ENCODE measurements at regions of chr6 and their contacts with region 1.

Region 1: DNA sequence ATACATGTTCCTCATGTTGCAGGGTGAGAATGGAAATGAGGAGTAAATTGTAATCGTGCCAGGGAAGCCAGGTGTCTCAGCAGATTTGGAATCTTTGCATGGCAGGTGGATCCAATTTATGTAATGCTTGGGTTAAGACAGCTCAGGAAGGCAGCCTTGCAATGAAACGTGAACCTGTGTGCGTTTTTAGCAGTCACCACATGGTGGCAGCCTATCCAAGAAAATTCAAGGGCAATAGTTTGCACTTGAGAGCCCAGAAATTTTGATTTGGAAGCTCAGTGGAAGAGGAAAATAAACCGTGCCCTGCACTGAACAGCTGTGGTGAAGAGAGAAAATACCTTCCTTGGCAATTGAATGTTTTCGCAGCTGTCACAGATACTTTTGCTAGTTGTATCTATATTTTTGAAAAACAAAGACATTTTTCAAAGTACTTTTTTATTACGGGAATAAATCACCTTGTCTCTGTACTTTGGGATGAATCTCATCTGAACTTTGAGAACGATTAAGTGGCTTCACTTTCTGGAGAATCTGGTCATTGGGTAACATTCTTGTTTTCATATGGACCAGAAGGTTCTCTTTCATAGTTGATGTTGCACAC is 26.5 kb downstream of the MTHFD1L start:
- DNase-seq: peak; percentile 34
- ATAC-seq: peak; percentile 69
- H3K4me3 ChIP-seq: no peak overlapping the region
- H3K27ac ChIP-seq: no peak overlapping the region
- H3K4me1 ChIP-seq: peaks cover 40% of the 10 kb centered on the region
- H3K27me3 ChIP-seq: no peaks in the 10 kb centered on the region
- CTCF ChIP-seq: peak; percentile 76 to 89 (median 88)
- EP300 ChIP-seq: no peak
- POLR2A ChIP-seq: no peak
- RAD21 ChIP-seq: peak; percentile 90

Region 2: DNA sequence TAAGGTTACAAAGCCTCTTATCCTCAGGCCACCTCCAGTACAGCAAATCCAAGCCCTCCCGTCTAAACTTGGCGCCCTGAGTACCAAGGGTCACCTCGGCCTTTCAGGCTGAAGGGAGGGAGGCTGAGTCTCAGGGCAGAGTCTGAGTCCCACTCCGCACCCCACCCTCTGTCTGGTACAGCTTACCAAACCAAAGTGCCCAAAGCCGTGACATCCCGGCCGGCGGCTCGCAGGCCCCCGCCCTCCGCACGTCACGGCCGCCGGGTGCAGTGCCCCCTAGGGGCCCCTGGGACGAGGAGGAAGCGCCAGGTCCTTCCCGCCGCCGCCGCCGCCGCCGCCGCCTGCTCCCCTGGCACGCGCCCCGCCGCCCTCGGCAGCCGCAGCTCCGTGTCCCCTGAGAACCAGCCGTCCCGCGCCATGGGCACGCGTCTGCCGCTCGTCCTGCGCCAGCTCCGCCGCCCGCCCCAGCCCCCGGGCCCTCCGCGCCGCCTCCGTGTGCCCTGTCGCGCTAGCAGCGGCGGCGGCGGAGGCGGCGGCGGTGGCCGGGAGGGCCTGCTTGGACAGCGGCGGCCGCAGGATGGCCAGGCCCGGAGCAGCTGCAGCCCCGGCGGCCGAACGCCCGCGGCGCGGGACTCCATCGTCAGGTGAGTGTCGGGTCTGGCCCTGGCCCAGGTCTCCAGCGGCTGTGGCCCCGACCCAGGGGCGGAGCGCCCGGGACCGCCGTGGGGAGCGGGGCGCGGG is 26.4 kb before region 1 on chr6 and contains the start of gene MTHFD1L:
- CTCF ChIA-PET with region 1: interaction called, 11 read pairs
- POLR2A ChIA-PET with region 1: interaction called, 3 read pairs
- RAD21 ChIA-PET with region 1: interaction called, 3 read pairs
- SMC1A ChIA-PET with region 1: interaction called, 5 read pairs
- in situ Hi-C with region 1: no loop called
- intact Hi-C with region 1: no loop called
- DNase-seq: no peak
- ATAC-seq: peak; percentile 76
- H3K4me3 ChIP-seq: peak within 1 kb of the TSS; percentile 81
- H3K27ac ChIP-seq: peak within 1 kb of the TSS; percentile 80
- H3K4me1 ChIP-seq: peaks cover 11% of the 10 kb centered on the region
- H3K27me3 ChIP-seq: no peaks in the 10 kb centered on the region
- CTCF ChIP-seq: peak; percentile 39 to 53 (median 43); a peak in 5 of 6 replicates
- EP300 ChIP-seq: no peak
- POLR2A ChIP-seq: peak; percentile 65
- RAD21 ChIP-seq: peak; percentile 11; the same call in 1 of the 2 replicates
- polyA plus RNA-seq, gene MTHFD1L: 15.6 to 21.8 TPM

Region 3: GRCh38 chr6:150928882-150929281 is 36.9 kb after region 1 on chr6:
- CTCF ChIA-PET with region 1: interaction called, 38 read pairs
- POLR2A ChIA-PET with region 1: interaction called, 5 read pairs
- RAD21 ChIA-PET with region 1: interaction called, 11 read pairs
- SMC1A ChIA-PET with region 1: interaction called, 19 read pairs
- in situ Hi-C with region 1: no loop called
- intact Hi-C with region 1: loop called (anchors 1 kb)
- DNase-seq: no peak
- ATAC-seq: peak; percentile 56
- H3K4me3 ChIP-seq: no peak overlapping the region
- H3K27ac ChIP-seq: no peak overlapping the region
- H3K4me1 ChIP-seq: no peaks in the 10 kb centered on the region
- H3K27me3 ChIP-seq: no peaks in the 10 kb centered on the region
- CTCF ChIP-seq: peak; percentile 39 to 53 (median 40); a peak in 5 of 6 replicates
- EP300 ChIP-seq: no peak
- POLR2A ChIP-seq: no peak
- RAD21 ChIP-seq: peak; percentile 20; the same call in 1 of the 2 replicates

Region 4: GRCh38 chr6:151323791-151324487 is 432.0 kb after region 1 on chr6:
- CTCF ChIA-PET with region 1: interaction called, 369 read pairs
- POLR2A ChIA-PET with region 1: interaction called, 3 read pairs
- RAD21 ChIA-PET with region 1: interaction called, 180 read pairs
- SMC1A ChIA-PET with region 1: interaction called, 200 read pairs
- in situ Hi-C with region 1: loop called (anchors 5 kb)
- intact Hi-C with region 1: loop called (anchors 1 kb)
- DNase-seq: peak; percentile 9
- ATAC-seq: peak; percentile 96
- H3K4me3 ChIP-seq: no peak overlapping the region
- H3K27ac ChIP-seq: no peak overlapping the region
- H3K4me1 ChIP-seq: no peaks in the 10 kb centered on the region
- H3K27me3 ChIP-seq: peaks cover 0 to 7% of the 10 kb centered on the region in 2 experiments; a peak in 2 of 4 replicates
- CTCF ChIP-seq: peak; percentile 92 to 98 (median 96)
- EP300 ChIP-seq: 0 out of 4 replicates have a peak, but pooled peaks of 1 of the 2 experiments have one; percentile 18
- POLR2A ChIP-seq: no peak
- RAD21 ChIP-seq: peak; percentile 83

Region 5: DNA sequence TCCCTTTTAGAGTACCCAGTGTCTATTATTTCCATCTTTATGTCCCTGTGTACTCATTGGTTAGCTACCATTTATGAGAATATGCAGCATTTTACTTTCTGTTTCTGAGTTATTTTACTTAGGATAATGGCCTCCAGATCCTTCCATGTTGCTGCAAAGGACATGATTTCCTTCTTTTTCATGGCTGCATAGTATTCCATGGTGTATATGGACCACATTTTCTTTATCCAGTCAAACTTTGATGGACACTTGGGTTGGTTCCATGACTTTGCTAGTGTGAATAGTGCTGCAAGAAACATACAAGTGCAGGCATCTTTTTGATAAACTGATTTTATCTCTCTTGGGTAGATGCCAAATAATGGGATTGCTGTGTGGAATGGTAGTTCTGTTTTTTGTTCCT is 443.9 kb after region 1 on chr6:
- CTCF ChIA-PET with region 1: interaction called, 126 read pairs
- POLR2A ChIA-PET with region 1: no interaction called
- RAD21 ChIA-PET with region 1: interaction called, 32 read pairs
- SMC1A ChIA-PET with region 1: interaction called, 37 read pairs
- in situ Hi-C with region 1: no loop called
- intact Hi-C with region 1: no loop called
- DNase-seq: no peak
- ATAC-seq: no peak
- H3K4me3 ChIP-seq: no peak overlapping the region
- H3K27ac ChIP-seq: no peak overlapping the region
- H3K4me1 ChIP-seq: no peaks in the 10 kb centered on the region
- H3K27me3 ChIP-seq: no peaks in the 10 kb centered on the region
- CTCF ChIP-seq: no peak
- EP300 ChIP-seq: no peak
- POLR2A ChIP-seq: no peak
- RAD21 ChIP-seq: no peak

Measured in GM12878 (cell line).